ENCODE measurements at regions of chr3 and their contacts with region 1.

Region 1: GRCh38 chr3:354432-354831 is 157.9 kb downstream of the CHL1 start:
- DNase-seq: peak; percentile 10
- H3K4me3 Mint-ChIP-seq: no peak overlapping the region
- H3K27ac Mint-ChIP-seq: no peak overlapping the region
- H3K4me1 Mint-ChIP-seq: no peaks in the 10 kb centered on the region
- H3K27me3 Mint-ChIP-seq: no peaks in the 10 kb centered on the region

Region 2: DNA sequence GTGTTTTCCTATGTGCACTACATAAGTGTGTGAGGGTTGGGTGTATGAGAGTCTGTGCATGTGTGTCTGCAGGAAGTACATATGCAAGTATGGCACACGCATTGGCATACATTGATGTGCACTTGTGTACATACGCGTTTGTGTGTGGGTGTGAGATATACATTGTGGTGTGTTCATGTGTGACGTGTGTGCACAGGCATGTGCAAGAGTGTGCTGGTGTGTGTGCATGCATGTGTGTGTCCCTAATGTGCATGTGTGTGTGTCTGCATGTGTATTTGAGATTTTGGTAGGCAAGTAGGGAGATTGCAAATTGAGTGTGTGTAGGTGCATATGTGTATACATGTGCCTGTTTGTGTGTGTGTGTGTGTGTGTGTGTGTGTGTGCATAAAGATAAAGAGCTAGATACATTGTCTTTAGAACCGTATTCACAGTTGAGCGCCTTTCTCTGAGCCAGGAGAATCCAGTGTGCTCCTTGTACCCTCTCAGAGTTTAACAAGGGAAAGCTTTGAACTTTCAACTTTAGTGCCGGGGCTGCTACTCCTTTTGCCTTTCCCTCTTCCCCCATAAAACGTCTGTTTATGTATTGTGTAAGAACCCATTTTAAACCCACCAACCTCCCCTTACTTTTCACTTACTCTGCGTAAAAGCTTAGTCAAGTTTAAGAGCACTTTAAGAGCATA is 310.3 kb before region 1 on chr3:
- CTCF ChIA-PET with region 1: interaction called, 8 read pairs
- POLR2A ChIA-PET with region 1: no interaction called
- intact Hi-C with region 1: loop called (anchors 1 kb)
- DNase-seq: no peak
- H3K4me3 Mint-ChIP-seq: no peak overlapping the region
- H3K27ac Mint-ChIP-seq: no peak overlapping the region
- H3K4me1 Mint-ChIP-seq: no peaks in the 10 kb centered on the region
- H3K27me3 Mint-ChIP-seq: peaks cover 22% of the 10 kb centered on the region

Region 3: DNA sequence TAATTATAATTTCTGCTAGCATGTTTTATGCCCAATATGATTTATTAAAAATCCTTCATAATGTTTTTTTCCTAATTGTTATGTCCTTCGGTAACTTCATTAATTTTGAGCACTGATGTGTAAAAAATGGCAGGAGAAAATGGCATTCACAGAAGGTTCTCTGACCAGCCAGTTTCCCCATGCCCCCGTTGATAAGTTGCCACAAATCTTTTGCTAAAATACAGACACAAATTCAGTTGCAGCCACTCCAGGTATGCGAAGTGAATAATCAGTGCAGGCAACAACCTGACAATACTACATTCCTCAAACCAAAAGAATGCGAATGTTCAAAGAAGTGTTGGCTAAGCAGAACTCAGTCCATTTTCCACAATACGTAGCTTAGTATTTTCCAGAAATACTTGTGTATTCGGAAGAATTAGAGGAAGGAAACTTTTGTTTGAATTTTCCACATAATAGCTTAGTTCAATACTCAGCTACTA is 125.2 kb before region 1 on chr3:
- CTCF ChIA-PET with region 1: no interaction called
- POLR2A ChIA-PET with region 1: no interaction called
- intact Hi-C with region 1: no loop called
- DNase-seq: no peak
- H3K4me3 Mint-ChIP-seq: no peak overlapping the region
- H3K27ac Mint-ChIP-seq: no peak overlapping the region
- H3K4me1 Mint-ChIP-seq: no peaks in the 10 kb centered on the region
- H3K27me3 Mint-ChIP-seq: no peaks in the 10 kb centered on the region

Measured in activated CD4-positive, alpha-beta memory T cell treated with anti-CD3 and anti-CD28 coated beads for 36 hours (primary cell).